Heart left ventricle (tissue), 16 donors: ENCODE measurements at regions of chr20 and their contacts with region 1.

Region 1: DNA sequence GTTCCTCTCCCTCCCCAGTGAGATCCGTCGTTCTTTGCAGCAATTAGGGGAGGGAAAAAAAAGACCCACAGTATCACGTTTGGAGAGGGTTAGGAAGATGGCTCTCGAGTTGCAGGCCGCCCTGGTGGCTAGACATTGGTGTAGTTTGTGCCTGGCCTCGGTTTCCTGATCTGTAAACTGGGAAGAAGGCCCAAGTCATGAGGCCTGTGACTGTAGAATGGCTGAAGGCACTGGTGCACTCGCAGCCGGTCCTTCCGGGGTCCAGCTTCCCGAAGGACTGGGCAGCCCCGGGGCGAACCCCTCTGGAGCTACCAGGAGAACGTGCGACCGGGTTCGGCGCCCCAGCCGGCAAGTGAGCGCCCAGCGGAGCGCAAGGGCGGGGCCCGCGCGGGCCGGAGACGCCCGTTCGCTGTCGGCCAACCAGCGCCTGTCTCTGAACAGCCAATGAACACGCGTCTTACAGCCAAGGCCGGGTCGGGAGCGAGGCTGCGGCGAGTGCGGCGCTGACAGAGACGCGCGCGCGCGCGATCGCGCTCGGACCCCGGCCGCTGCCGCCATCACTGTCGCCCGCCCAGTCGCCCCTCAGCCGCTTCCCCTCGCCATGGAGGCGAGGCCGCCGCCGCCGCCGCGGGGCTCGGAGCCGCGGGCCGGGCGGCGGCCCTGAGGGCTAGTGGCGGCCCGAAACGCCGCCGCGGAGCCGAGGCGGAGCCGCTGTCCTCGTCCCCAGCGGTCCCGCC is at the start of gene PTPRA:
- DNase-seq: peak; percentile 94 to 96 (median 95)
- ATAC-seq: peak; percentile 97 to 98 (median 97)
- H3K4me3 ChIP-seq: peak within 1 kb of the TSS; percentile 62 to 100 (median 84)
- H3K27ac ChIP-seq: peak within 1 kb of the TSS; percentile 70 to 92 (median 80)
- H3K4me1 ChIP-seq: peaks cover 0 to 52% (median 31%) of the 10 kb centered on the region in 12 donors
- H3K27me3 ChIP-seq: no peaks in the 10 kb centered on the region
- CTCF ChIP-seq: peak in 1 of 12 donors; percentile 4
- POLR2A ChIP-seq: peak; percentile 15 to 95
- total RNA-seq, gene PTPRA: 17.3 to 43.4 (median 32.2) TPM

Region 2: GRCh38 chr20:2840138-2840966 is 32.8 kb before region 1 on chr20 and contains the starts of genes PCED1A and VPS16:
- intact Hi-C with region 1: loop called in 2 of 10 experiments (anchors 1 to 2 kb)
- DNase-seq: peak; percentile 89 to 95 (median 91)
- ATAC-seq: peak; percentile 97 to 99 (median 98)
- H3K4me3 ChIP-seq: peak within 1 kb of the TSS; percentile 70 to 99 (median 91)
- H3K27ac ChIP-seq: peak within 1 kb of the TSS; percentile 69 to 96 (median 87)
- H3K4me1 ChIP-seq: peaks cover 0 to 26% (median 15%) of the 10 kb centered on the region in 12 donors
- H3K27me3 ChIP-seq: no peaks in the 10 kb centered on the region
- CTCF ChIP-seq: no peak
- POLR2A ChIP-seq: peak in 1 of 2 donors; percentile 46
- total RNA-seq, gene PCED1A: 5.0 to 20.7 (median 6.8) TPM
- total RNA-seq, gene VPS16: 13.9 to 28.6 (median 19.5) TPM

Region 3: DNA sequence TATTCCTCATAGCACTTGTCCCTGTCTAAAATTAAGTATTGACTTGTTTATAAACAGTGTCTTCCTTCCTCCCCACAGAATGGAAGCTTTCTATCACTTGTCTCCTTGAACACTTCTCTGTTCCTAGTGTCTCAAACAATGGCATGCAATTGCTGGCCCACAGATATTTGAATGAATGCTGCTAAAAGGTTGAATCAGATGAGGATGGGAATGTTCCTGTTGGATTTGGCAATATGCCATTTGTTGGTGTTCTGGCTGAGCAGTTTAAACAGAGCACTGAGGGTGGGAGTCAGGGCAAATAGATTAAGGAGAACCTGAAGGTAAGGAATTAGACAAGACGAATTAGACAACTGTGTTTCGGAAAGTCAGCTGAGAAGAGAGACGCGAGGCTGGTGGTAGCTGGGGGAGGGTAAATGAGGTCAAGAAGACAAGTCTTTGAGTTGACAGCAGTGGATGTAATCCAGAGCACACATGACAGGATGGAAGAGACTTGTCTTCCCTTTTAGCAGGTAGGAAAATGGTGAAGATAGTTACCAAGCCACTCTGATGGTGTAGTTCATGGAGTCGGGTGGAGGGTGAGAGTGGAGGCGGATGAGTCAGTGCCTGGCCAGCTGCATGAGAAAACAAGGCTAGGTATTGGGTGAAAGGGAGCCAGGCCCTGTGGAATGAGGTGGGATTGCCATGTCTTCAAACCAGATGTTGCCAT is 111.9 kb after region 1 on chr20:
- intact Hi-C with region 1: loop called in 1 of 10 experiments (anchors 10 kb)
- DNase-seq: peak in 1 of 5 donors; percentile 31
- ATAC-seq: peak in 2 of 4 donors; percentile 12 to 69
- H3K4me3 ChIP-seq: no peak overlapping the region
- H3K27ac ChIP-seq: no peak overlapping the region
- H3K4me1 ChIP-seq: peaks cover 0 to 60% (median 7%) of the 10 kb centered on the region in 12 donors
- H3K27me3 ChIP-seq: no peaks in the 10 kb centered on the region
- CTCF ChIP-seq: no peak
- POLR2A ChIP-seq: no peak

Region 4: DNA sequence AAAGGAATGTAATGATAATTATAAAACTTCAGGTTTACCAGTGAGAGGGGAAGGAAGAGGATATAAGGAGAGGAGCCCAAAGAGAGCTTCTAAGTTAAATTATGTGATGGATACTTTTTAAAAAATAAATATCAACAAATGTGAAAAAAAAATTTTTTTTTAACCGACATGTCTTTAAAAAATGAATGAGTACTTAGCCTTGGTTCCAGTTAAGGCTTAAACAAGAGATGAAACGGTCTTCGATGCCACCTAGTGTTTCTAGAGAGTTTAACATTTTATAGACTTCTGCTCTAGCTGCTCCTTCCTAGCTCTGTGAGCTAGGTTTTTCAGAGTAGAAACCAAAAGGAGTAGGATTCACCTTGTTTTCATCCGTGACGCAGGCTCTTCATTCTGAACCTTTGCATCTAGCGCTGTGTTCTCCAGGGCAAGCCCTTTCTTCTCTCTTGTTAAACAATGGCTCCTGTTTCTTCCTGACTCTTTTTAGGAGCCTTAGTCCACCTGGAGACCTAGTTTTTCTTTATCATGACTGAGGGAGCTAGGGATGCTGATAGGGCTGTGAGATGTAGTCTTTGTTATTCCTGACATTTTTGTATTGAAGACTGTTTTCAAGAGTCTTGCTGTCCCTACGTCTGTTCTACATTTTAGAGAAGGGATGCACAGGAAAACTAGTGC is 127.8 kb after region 1 on chr20:
- intact Hi-C with region 1: loop called in 1 of 10 experiments (anchors 5 kb)
- DNase-seq: no peak
- ATAC-seq: peak; percentile 49 to 72 (median 56)
- H3K4me3 ChIP-seq: no peak overlapping the region
- H3K27ac ChIP-seq: no peak overlapping the region
- H3K4me1 ChIP-seq: no peaks in the 10 kb centered on the region
- H3K27me3 ChIP-seq: no peaks in the 10 kb centered on the region
- CTCF ChIP-seq: peak in 10 of 12 donors; percentile 37 to 65 (median 48)
- POLR2A ChIP-seq: no peak